Endothelial cell of umbilical vein (primary cell): ENCODE measurements at regions of chr1 and their contacts with region 1.

Region 1: GRCh38 chr1:156065212-156065611 is 4.3 kb downstream of the RAB25 start:
- DNase-seq: no peak
- H3K4me3 ChIP-seq: no peak overlapping the region
- H3K27ac ChIP-seq: no peak overlapping the region
- H3K4me1 ChIP-seq: peaks cover 6% of the 10 kb centered on the region
- H3K27me3 ChIP-seq: no peaks in the 10 kb centered on the region
- CTCF ChIP-seq: no peak
- POLR2A ChIP-seq: no peak

Region 2: GRCh38 chr1:155961937-155962336 is 103.3 kb before region 1 on chr1:
- CTCF ChIA-PET with region 1: interaction called, 14 read pairs
- POLR2A ChIA-PET with region 1: no interaction called
- dilution Hi-C with region 1: no loop called
- intact Hi-C with region 1: loop called (anchors 1 kb)
- DNase-seq: peak; percentile 91
- H3K4me3 ChIP-seq: no peak overlapping the region
- H3K27ac ChIP-seq: peak overlapping the region; percentile 86
- H3K4me1 ChIP-seq: peaks cover 22% of the 10 kb centered on the region
- H3K27me3 ChIP-seq: no peaks in the 10 kb centered on the region
- CTCF ChIP-seq: peak; percentile 44 to 61
- POLR2A ChIP-seq: peak; percentile 7

Region 3: DNA sequence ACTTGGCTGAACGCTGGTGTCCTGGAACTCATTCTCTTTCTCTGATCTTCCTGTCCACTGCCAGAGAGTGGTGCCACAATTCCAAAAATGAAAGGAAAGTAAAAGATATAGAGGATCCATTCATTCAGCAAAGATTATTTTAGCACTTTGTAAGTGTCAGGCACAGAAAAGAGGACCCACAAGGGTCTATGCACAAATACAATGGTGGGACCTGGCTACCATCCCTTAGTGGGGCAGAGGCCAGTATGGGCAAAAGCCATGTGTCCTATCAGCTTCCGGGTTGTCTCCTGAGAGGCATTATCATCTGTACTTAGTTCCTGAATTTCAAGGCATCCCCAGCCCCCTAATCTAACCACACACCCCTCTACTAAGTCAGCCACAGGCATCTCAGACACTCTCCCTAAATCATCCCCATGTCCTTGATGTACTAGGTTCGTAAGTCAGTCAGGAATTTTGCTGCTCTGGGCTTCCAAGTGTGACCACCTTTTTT is 63.5 kb before region 1 on chr1:
- CTCF ChIA-PET with region 1: interaction called, 20 read pairs
- POLR2A ChIA-PET with region 1: no interaction called
- dilution Hi-C with region 1: no loop called
- intact Hi-C with region 1: no loop called
- DNase-seq: no peak
- H3K4me3 ChIP-seq: no peak overlapping the region
- H3K27ac ChIP-seq: no peak overlapping the region
- H3K4me1 ChIP-seq: no peaks in the 10 kb centered on the region
- H3K27me3 ChIP-seq: no peaks in the 10 kb centered on the region
- CTCF ChIP-seq: no peak
- POLR2A ChIP-seq: no peak

Region 4: GRCh38 chr1:156025877-156026276 is 39.3 kb before region 1 on chr1:
- CTCF ChIA-PET with region 1: interaction called, 92 read pairs
- POLR2A ChIA-PET with region 1: no interaction called
- dilution Hi-C with region 1: no loop called
- intact Hi-C with region 1: loop called (anchors 1 kb)
- DNase-seq: peak; percentile 64
- H3K4me3 ChIP-seq: no peak overlapping the region
- H3K27ac ChIP-seq: no peak overlapping the region
- H3K4me1 ChIP-seq: peaks cover 3% of the 10 kb centered on the region
- H3K27me3 ChIP-seq: no peaks in the 10 kb centered on the region
- CTCF ChIP-seq: peak; percentile 70 to 90
- POLR2A ChIP-seq: no peak

Region 5: GRCh38 chr1:156054500-156055280 is 10.5 kb before region 1 on chr1 and contains the start of gene LAMTOR2:
- CTCF ChIA-PET with region 1: interaction called, 14 read pairs
- POLR2A ChIA-PET with region 1: no interaction called
- dilution Hi-C with region 1: no loop called
- intact Hi-C with region 1: no loop called
- DNase-seq: peak; percentile 98
- H3K4me3 ChIP-seq: peak within 1 kb of the TSS; percentile 57 to 78 (median 74)
- H3K27ac ChIP-seq: peak within 1 kb of the TSS; percentile 95
- H3K4me1 ChIP-seq: peaks cover 15% of the 10 kb centered on the region
- H3K27me3 ChIP-seq: no peaks in the 10 kb centered on the region
- CTCF ChIP-seq: no peak
- POLR2A ChIP-seq: peak; percentile 78
- total RNA-seq, gene LAMTOR2: 77.7 and 80.3 TPM in 2 replicates